Naive thymus-derived CD4-positive, alpha-beta T cell (primary cell): ENCODE measurements at regions of chr15 and their contacts with region 1.

Region 1: DNA sequence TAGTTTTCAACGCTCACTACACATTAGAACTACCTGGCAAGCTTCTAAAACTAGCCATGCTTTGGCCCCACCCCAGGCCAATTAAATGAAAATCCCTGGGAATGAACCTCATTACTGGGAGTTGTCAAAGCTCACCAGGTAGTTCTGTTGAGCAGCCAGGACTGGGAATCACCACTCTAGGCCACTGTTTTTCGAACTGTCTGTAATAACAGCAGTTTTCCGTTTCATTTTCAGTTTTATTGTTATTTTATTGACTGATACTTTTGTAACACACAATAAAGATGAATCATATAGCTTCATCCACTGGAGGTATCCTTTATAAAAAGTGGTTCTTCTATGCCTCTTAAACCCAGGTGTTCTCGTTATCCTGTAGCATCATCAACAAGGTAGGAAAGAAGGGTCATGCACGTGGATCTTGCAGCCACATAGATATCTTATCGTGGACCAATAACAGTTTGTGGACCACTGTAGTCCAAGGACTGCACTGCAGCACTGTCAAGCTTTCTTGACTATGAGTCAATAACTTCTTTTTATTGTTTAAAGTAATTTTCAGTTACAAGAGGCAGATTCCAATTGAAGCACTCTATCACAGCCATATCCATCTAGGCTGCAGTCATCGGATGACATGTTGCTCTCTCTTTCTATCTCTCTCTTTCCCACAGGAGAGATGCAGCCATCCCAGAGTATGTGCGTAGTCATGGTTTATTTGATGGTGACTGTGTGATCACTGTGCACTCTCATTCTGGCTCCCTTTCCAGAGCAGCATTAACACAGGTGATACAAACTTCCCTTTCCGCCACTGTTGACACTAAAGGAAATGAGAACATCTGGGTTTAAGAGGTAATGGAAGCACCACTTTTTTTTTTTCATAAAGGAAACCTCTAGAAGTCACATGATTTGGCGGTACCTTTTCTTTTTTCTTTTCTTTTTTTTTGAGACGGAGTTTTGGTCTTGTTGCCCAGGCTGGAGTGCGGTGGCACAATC is 39.0 kb upstream of the BLM start:
- DNase-seq: peak in 7 of 9 donors; percentile 57 to 79 (median 70)
- ATAC-seq: peak; percentile 84
- H3K4me3 ChIP-seq: peak overlapping the region; percentile 18
- H3K4me3 Mint-ChIP-seq: peak overlapping the region; percentile 51 to 87 (median 71)
- H3K27ac ChIP-seq: no peak overlapping the region
- H3K27ac Mint-ChIP-seq: peak overlapping the region; percentile 21 to 96 (median 92)
- H3K4me1 ChIP-seq: peaks cover 5 to 18% of the 10 kb centered on the region in 2 donors
- H3K4me1 Mint-ChIP-seq: peaks cover 12 to 58% (median 26%) of the 10 kb centered on the region in 7 donors
- H3K27me3 ChIP-seq: no peaks in the 10 kb centered on the region
- H3K27me3 Mint-ChIP-seq: peaks cover 0 to 4% (median 0%) of the 10 kb centered on the region in 5 donors

Region 2: DNA sequence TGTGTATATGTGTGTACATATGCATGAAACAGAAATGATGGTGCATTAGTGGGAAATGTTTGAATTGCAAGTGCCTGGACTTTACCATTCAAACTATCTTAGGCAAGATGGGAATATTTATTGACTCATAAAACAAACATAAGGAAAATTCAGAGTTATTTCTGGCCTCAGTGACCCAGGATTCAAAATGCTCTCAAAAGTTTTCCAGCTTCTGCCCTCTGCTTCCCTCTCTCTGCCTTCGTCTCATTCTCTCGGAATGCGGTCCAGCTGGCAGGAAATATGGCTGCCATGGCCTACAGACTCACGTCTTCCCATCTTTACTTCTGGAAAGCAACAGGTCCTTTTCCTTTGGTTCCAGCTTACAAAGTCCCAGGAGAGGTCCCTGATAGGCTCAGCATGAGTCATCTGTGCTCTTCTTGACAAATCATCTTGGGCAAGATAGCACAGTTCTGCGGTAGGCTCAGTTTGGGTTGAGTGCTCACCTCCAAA is 334.8 kb before region 1 on chr15:
- CTCF ChIA-PET with region 1: no interaction called
- POLR2A ChIA-PET with region 1: no interaction called
- intact Hi-C with region 1: no loop called
- DNase-seq: no peak
- ATAC-seq: no peak
- H3K4me3 ChIP-seq: no peak overlapping the region
- H3K4me3 Mint-ChIP-seq: no peak overlapping the region
- H3K27ac ChIP-seq: no peak overlapping the region
- H3K27ac Mint-ChIP-seq: no peak overlapping the region
- H3K4me1 ChIP-seq: peaks cover 3 to 19% of the 10 kb centered on the region in 2 donors
- H3K4me1 Mint-ChIP-seq: peaks cover 6 to 30% (median 18%) of the 10 kb centered on the region in 7 donors
- H3K27me3 ChIP-seq: no peaks in the 10 kb centered on the region
- H3K27me3 Mint-ChIP-seq: peaks cover 0 to 7% (median 0%) of the 10 kb centered on the region in 5 donors

Region 3: GRCh38 chr15:90629217-90629616 is 48.9 kb before region 1 on chr15:
- CTCF ChIA-PET with region 1: no interaction called
- POLR2A ChIA-PET with region 1: no interaction called
- intact Hi-C with region 1: no loop called
- DNase-seq: peak in 1 of 9 donors; percentile 13
- ATAC-seq: no peak
- H3K4me3 ChIP-seq: no peak overlapping the region
- H3K4me3 Mint-ChIP-seq: no peak overlapping the region
- H3K27ac ChIP-seq: no peak overlapping the region
- H3K27ac Mint-ChIP-seq: peak overlapping the region in 3 of 9 donors; percentile 41 to 65 (median 49)
- H3K4me1 ChIP-seq: no peaks in the 10 kb centered on the region
- H3K4me1 Mint-ChIP-seq: peaks cover 0 to 6% (median 0%) of the 10 kb centered on the region in 7 donors
- H3K27me3 ChIP-seq: no peaks in the 10 kb centered on the region
- H3K27me3 Mint-ChIP-seq: no peaks in the 10 kb centered on the region

Region 4: DNA sequence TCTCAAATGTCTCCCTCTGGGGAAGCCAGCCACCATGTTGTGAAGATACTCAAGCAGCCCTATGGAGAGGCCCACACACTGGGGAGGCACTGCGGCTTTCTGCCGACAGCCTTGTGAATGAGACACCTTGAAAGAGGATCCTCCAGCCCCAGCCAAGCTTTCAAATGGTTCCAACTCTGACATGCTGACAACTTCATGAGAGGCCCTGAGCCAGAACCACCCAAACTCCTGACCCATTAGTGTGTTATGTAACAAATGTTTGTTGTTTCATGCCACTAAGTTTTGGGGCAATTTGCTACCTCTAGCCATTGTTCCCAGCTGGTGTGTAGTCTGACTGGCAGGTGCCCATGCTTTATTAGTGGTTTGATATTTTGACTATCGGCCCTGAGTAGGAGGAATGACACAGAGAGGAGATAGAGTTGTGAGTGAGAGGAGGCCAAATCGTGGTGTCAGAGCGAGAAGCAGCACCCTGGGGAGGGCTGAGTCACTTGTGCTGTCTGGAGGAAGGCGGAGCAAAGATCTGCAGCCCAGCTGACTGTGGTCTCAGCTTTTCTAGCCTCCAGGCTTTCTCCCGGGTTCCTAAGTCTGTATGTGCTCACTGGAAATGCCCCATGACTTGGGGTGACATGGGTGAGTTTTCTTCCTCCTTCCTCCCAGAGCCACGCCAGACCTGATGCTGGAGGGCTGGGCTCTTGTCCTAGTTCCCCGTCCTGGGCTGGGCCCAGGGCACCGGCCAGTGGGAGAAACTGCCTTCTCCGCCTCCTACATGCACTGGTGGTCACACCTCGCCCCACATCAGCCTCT is 17.7 kb before region 1 on chr15:
- CTCF ChIA-PET with region 1: interaction called, 3 read pairs
- POLR2A ChIA-PET with region 1: interaction called, 5 read pairs
- intact Hi-C with region 1: loop called (anchors 1 kb)
- DNase-seq: peak in 6 of 9 donors; percentile 25 to 68 (median 38)
- ATAC-seq: peak; percentile 83
- H3K4me3 ChIP-seq: peak overlapping the region; percentile 45
- H3K4me3 Mint-ChIP-seq: peak overlapping the region; percentile 68 to 93 (median 83)
- H3K27ac ChIP-seq: no peak overlapping the region
- H3K27ac Mint-ChIP-seq: peak overlapping the region in 4 of 9 donors; percentile 32 to 79 (median 74)
- H3K4me1 ChIP-seq: peaks cover 40 to 50% of the 10 kb centered on the region in 2 donors
- H3K4me1 Mint-ChIP-seq: peaks cover 61 to 93% (median 80%) of the 10 kb centered on the region in 7 donors
- H3K27me3 ChIP-seq: no peaks in the 10 kb centered on the region
- H3K27me3 Mint-ChIP-seq: peaks cover 0 to 32% (median 14%) of the 10 kb centered on the region in 5 donors

Region 5: DNA sequence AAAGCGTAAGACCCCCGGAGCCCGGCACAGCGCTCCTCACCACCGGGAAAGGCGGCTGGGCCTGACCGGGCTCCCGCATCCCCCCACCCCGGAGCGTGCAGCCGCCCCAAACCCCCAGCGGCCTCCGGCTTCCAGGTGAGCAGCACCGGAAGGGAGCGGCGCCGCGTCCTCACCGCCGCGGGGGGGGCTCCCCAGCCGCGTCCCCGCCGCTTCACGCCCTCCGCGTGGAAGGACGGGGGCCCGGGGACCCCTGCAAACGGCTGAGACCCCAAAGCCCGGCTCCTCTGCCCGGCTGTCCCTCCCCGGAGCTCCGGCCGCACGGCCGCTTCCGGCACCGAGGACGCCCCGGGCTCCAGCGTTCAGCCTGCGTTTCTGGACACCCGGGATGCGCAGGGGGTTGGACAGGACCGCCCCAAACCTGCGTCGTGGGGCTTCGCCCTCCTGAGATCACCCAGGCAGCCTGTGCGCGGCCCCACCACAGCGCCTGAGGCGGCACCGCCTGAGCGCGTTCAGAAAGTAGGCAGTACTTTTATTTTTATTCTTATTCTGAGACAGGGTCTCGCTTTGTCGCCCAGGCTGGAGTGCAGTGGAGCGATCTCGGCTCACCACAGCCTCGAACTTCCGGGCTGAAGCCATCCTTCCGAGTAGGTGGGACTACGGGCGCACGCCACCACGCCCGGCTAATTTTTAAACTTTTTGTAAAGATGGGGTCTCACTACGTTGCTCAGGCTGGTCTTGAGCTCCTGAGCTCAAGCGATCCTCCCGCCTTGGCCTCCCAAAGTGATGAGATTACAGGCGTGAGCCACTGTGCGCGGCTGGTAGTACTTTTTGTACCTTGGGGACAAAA is 12.6 kb before region 1 on chr15:
- CTCF ChIA-PET with region 1: interaction called, 3 read pairs
- POLR2A ChIA-PET with region 1: interaction called, 11 read pairs
- intact Hi-C with region 1: loop called (anchors 1 kb)
- DNase-seq: peak in 8 of 9 donors; percentile 12 to 67 (median 38)
- ATAC-seq: peak; percentile 60
- H3K4me3 ChIP-seq: peak overlapping the region; percentile 58
- H3K4me3 Mint-ChIP-seq: peak overlapping the region; percentile 77 to 90 (median 84)
- H3K27ac ChIP-seq: peak overlapping the region; percentile 15
- H3K27ac Mint-ChIP-seq: peak overlapping the region in 8 of 9 donors; percentile 41 to 93 (median 70)
- H3K4me1 ChIP-seq: peaks cover 18 to 22% of the 10 kb centered on the region in 2 donors
- H3K4me1 Mint-ChIP-seq: peaks cover 31 to 68% (median 55%) of the 10 kb centered on the region in 7 donors
- H3K27me3 ChIP-seq: no peaks in the 10 kb centered on the region
- H3K27me3 Mint-ChIP-seq: peaks cover 0 to 13% (median 10%) of the 10 kb centered on the region in 5 donors

Region 6: GRCh38 chr15:90691982-90692773 is 14.1 kb after region 1 on chr15:
- CTCF ChIA-PET with region 1: no interaction called
- POLR2A ChIA-PET with region 1: interaction called, 7 read pairs
- intact Hi-C with region 1: loop called (anchors 1 to 2 kb)
- DNase-seq: no peak
- ATAC-seq: no peak
- H3K4me3 ChIP-seq: no peak overlapping the region
- H3K4me3 Mint-ChIP-seq: peak overlapping the region in 1 of 10 donors; percentile 33
- H3K27ac ChIP-seq: no peak overlapping the region
- H3K27ac Mint-ChIP-seq: peak overlapping the region in 1 of 9 donors; percentile 40
- H3K4me1 ChIP-seq: no peaks in the 10 kb centered on the region
- H3K4me1 Mint-ChIP-seq: peaks cover 1 to 52% (median 10%) of the 10 kb centered on the region in 7 donors
- H3K27me3 ChIP-seq: no peaks in the 10 kb centered on the region
- H3K27me3 Mint-ChIP-seq: no peaks in the 10 kb centered on the region

Region 7: GRCh38 chr15:90708516-90708915 is 30.4 kb after region 1 on chr15:
- CTCF ChIA-PET with region 1: no interaction called
- POLR2A ChIA-PET with region 1: no interaction called
- intact Hi-C with region 1: no loop called
- DNase-seq: no peak
- ATAC-seq: no peak
- H3K4me3 ChIP-seq: no peak overlapping the region
- H3K4me3 Mint-ChIP-seq: no peak overlapping the region
- H3K27ac ChIP-seq: no peak overlapping the region
- H3K27ac Mint-ChIP-seq: no peak overlapping the region
- H3K4me1 ChIP-seq: peaks cover 0 to 7% of the 10 kb centered on the region in 2 donors
- H3K4me1 Mint-ChIP-seq: peaks cover 11 to 29% (median 20%) of the 10 kb centered on the region in 7 donors
- H3K27me3 ChIP-seq: no peaks in the 10 kb centered on the region
- H3K27me3 Mint-ChIP-seq: no peaks in the 10 kb centered on the region

Region 8: DNA sequence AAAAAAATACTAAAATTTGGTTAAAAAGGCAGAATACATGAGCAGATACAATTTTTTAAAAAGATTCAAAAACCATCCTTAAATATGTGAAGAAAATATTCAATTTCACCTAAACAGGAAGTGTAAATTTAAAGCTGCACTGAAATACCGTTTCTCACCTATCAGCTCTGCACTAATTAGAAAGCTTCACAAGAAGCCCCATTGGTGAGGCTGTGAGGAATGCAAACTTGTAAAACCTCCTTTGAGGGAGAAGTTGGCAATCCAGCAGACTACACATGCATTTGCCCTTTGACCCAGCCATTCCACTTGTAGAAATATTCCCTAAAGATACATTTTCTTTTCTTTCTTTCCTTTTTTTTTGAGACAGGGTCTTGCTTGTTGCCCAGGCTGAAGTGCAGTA is 57.8 kb after region 1 on chr15:
- CTCF ChIA-PET with region 1: interaction called, 5 read pairs
- POLR2A ChIA-PET with region 1: interaction called, 11 read pairs
- intact Hi-C with region 1: no loop called
- DNase-seq: no peak
- ATAC-seq: no peak
- H3K4me3 ChIP-seq: no peak overlapping the region
- H3K4me3 Mint-ChIP-seq: no peak overlapping the region
- H3K27ac ChIP-seq: no peak overlapping the region
- H3K27ac Mint-ChIP-seq: no peak overlapping the region
- H3K4me1 ChIP-seq: no peaks in the 10 kb centered on the region
- H3K4me1 Mint-ChIP-seq: peaks cover 0 to 49% (median 9%) of the 10 kb centered on the region in 7 donors
- H3K27me3 ChIP-seq: no peaks in the 10 kb centered on the region
- H3K27me3 Mint-ChIP-seq: no peaks in the 10 kb centered on the region